Activated naive CD4-positive, alpha-beta T cell treated with anti-CD3 and anti-CD28 coated beads for 36 hours (primary cell): ENCODE measurements at regions of chr2 and their contacts with region 1.

Region 1: GRCh38 chr2:10097352-10098148 is 17.3 kb upstream of the CYS1 start:
- DNase-seq: peak; percentile 41
- H3K4me3 Mint-ChIP-seq: no peak overlapping the region
- H3K27ac Mint-ChIP-seq: no peak overlapping the region
- H3K4me1 Mint-ChIP-seq: peaks cover 2% of the 10 kb centered on the region
- H3K27me3 Mint-ChIP-seq: peaks cover 26% of the 10 kb centered on the region

Region 2: DNA sequence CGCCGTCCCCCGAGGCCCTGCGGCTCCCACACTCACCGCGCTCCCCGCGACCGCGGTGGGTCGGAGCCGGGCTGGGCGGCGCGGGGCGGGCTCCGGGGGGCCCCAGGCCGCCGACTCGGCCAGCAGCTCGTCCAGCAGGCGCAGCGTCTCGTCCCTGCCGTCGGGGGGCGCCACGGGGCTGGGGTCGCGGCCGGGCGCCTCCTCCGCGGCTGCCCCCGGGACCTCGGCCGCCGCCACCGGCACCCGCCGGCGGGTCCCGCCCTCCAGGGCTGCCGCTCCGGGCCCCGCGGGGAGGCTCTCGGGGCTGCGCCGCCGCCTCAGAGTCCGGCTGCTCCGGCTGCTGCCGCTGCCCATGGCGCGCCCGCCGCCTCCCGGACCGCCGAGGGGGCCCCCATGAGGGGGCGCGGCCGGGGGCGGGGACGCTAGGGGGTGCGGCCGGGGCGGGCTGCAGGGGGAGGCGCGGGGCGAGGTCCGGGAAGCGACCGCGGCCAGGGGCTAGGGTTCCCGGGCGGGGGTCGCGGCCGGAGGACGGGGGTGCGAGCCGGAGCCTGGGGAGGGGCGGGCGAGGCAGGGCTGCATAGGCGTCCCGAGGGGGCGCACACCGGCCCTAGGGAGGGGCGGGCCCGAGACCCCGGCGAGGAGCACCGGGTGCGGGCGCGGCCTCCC is 17.5 kb before region 1 on chr2 and contains the start of gene CYS1:
- CTCF ChIA-PET with region 1: interaction called, 117 read pairs
- intact Hi-C with region 1: no loop called
- DNase-seq: no peak
- H3K4me3 Mint-ChIP-seq: peak within 1 kb of the TSS; percentile 68
- H3K27ac Mint-ChIP-seq: no peak within 1 kb of the TSS
- H3K4me1 Mint-ChIP-seq: peaks cover 10% of the 10 kb centered on the region
- H3K27me3 Mint-ChIP-seq: peaks cover 79% of the 10 kb centered on the region
- total RNA-seq, gene CYS1: not detected

Region 3: GRCh38 chr2:10109311-10109710 is 11.8 kb after region 1 on chr2:
- CTCF ChIA-PET with region 1: interaction called, 10 read pairs
- intact Hi-C with region 1: no loop called
- DNase-seq: no peak
- H3K4me3 Mint-ChIP-seq: no peak overlapping the region
- H3K27ac Mint-ChIP-seq: no peak overlapping the region
- H3K4me1 Mint-ChIP-seq: no peaks in the 10 kb centered on the region
- H3K27me3 Mint-ChIP-seq: no peaks in the 10 kb centered on the region